Activated naive CD4-positive, alpha-beta T cell treated with anti-CD3 and anti-CD28 coated beads, Interleukin-2, amount 10 ng/mL, durations not matched to agents 7 days and 5 days (primary cell): ENCODE measurements at regions of chr12 and their contacts with region 1.

Region 1: GRCh38 chr12:75480469-75480949 is at the start of gene GLIPR1:
- DNase-seq: peak; percentile 76
- H3K4me3 Mint-ChIP-seq: peak within 1 kb of the TSS; percentile 93
- H3K27ac Mint-ChIP-seq: peak within 1 kb of the TSS; percentile 98
- H3K4me1 Mint-ChIP-seq: peaks cover 83% of the 10 kb centered on the region
- H3K27me3 Mint-ChIP-seq: no peaks in the 10 kb centered on the region

Region 2: GRCh38 chr12:75239987-75240386 is 240.5 kb before region 1 on chr12:
- CTCF ChIA-PET with region 1: no interaction called
- DNase-seq: no peak
- H3K4me3 Mint-ChIP-seq: no peak overlapping the region
- H3K27ac Mint-ChIP-seq: no peak overlapping the region
- H3K4me1 Mint-ChIP-seq: no peaks in the 10 kb centered on the region
- H3K27me3 Mint-ChIP-seq: no peaks in the 10 kb centered on the region

Region 3: GRCh38 chr12:75315518-75315917 is 165.0 kb before region 1 on chr12:
- CTCF ChIA-PET with region 1: no interaction called
- DNase-seq: no peak
- H3K4me3 Mint-ChIP-seq: no peak overlapping the region
- H3K27ac Mint-ChIP-seq: no peak overlapping the region
- H3K4me1 Mint-ChIP-seq: no peaks in the 10 kb centered on the region
- H3K27me3 Mint-ChIP-seq: no peaks in the 10 kb centered on the region

Region 4: GRCh38 chr12:75390899-75391538 is 89.5 kb before region 1 on chr12 and contains the start of gene GLIPR1L2:
- CTCF ChIA-PET with region 1: interaction called, 21 read pairs
- DNase-seq: peak; percentile 89
- H3K4me3 Mint-ChIP-seq: peak within 1 kb of the TSS; percentile 85
- H3K27ac Mint-ChIP-seq: peak within 1 kb of the TSS; percentile 80
- H3K4me1 Mint-ChIP-seq: peaks cover 38% of the 10 kb centered on the region
- H3K27me3 Mint-ChIP-seq: no peaks in the 10 kb centered on the region

Region 5: DNA sequence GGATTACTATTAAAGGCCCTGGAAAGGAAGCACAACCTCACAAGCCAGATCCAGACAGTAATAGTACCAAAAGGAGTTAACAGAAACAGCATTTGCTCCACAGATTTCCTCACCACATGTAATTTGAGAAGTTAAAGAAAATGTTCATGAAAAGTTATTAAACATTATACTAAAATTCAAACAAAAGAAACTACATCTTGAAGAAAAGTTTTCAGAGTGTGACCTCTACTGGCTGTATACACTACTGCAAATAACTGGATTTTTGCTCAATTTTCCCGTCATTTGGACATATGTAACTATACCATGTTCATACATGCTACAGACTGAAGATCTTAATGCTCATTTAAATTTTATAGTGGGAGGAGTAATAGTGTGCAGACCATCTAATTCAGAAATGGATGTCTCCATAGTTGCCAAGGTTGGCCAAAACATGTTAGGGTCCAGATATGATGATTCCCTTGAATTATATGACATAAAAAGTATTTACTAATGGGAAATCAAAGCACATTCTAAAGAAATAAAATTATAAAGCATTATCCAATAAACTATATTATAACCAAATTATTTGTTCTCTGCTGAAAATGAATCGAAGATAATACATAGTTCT is 25.3 kb after region 1 on chr12:
- CTCF ChIA-PET with region 1: interaction called, 41 read pairs
- DNase-seq: no peak
- H3K4me3 Mint-ChIP-seq: no peak overlapping the region
- H3K27ac Mint-ChIP-seq: no peak overlapping the region
- H3K4me1 Mint-ChIP-seq: peaks cover 27% of the 10 kb centered on the region
- H3K27me3 Mint-ChIP-seq: no peaks in the 10 kb centered on the region

Region 6: GRCh38 chr12:75526655-75527511 is 46.4 kb after region 1 on chr12:
- CTCF ChIA-PET with region 1: interaction called, 27 read pairs
- DNase-seq: peak; percentile 38
- H3K4me3 Mint-ChIP-seq: no peak overlapping the region
- H3K27ac Mint-ChIP-seq: no peak overlapping the region
- H3K4me1 Mint-ChIP-seq: peaks cover 7% of the 10 kb centered on the region
- H3K27me3 Mint-ChIP-seq: peaks cover 22% of the 10 kb centered on the region